ENCODE measurements at regions of chr3 and their contacts with region 1.

Region 1: DNA sequence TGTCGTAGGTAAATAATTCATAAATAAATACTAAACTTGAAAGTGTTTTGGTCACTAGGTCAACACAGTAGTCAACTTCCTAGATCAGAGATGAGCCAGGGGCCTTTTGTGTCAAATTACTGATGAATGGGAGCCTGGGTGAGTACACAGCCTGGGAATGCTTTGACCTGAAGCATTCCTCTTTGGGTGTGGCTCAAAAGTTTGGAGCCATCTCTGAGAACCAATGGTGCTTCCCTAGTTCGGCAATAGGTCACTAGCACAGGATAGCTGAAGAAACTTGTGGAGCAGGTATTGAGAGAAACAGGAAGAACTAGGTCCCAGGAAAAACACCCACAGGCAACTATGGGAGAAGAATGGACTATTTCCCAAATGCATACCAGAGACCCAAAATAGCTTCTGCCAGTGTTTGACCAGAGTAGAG is 56.6 kb upstream of the PLXND1 start:
- DNase-seq: peak; percentile 91 to 93
- H3K4me3 ChIP-seq: no peak overlapping the region
- H3K4me3 Mint-ChIP-seq: peak overlapping the region; percentile 70
- H3K27ac Mint-ChIP-seq: peak overlapping the region; percentile 98
- H3K4me1 ChIP-seq: peaks cover 70% of the 10 kb centered on the region
- H3K4me1 Mint-ChIP-seq: peaks cover 32% of the 10 kb centered on the region
- H3K27me3 ChIP-seq: no peaks in the 10 kb centered on the region
- H3K27me3 Mint-ChIP-seq: no peaks in the 10 kb centered on the region
- CTCF ChIP-seq: no peak

Region 2: GRCh38 chr3:129560901-129561594 is 102.0 kb before region 1 on chr3:
- CTCF ChIA-PET with region 1: no interaction called
- POLR2A ChIA-PET with region 1: no interaction called
- intact Hi-C with region 1: no loop called
- DNase-seq: no peak
- H3K4me3 ChIP-seq: no peak overlapping the region
- H3K4me3 Mint-ChIP-seq: no peak overlapping the region
- H3K27ac Mint-ChIP-seq: no peak overlapping the region
- H3K4me1 ChIP-seq: no peaks in the 10 kb centered on the region; the same call in 1 of the 2 replicates
- H3K4me1 Mint-ChIP-seq: peaks cover 8% of the 10 kb centered on the region
- H3K27me3 ChIP-seq: no peaks in the 10 kb centered on the region
- H3K27me3 Mint-ChIP-seq: no peaks in the 10 kb centered on the region
- CTCF ChIP-seq: no peak

Region 3: DNA sequence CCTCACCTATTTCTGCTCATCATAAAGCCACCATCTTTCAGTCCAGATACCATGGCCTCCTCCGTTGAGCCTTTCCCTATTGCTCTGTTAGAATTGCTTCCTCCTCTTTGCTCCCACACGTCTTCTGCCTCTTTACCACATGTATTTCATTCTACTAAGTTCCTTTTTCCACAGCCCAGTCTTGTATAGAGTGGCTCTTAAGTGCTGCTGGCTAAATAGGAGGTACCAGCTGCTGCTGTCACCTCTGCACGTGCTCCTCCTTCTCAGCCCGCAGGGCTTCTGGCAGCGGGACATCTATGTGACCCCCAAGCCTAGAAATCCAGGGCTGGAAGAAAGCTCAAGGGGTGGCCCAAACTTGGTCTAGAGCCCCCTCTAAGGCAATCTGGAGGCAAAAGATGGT is 17.7 kb before region 1 on chr3:
- CTCF ChIA-PET with region 1: no interaction called
- POLR2A ChIA-PET with region 1: no interaction called
- intact Hi-C with region 1: loop called (anchors 2 kb)
- DNase-seq: no peak
- H3K4me3 ChIP-seq: no peak overlapping the region
- H3K4me3 Mint-ChIP-seq: peak overlapping the region; percentile 16
- H3K27ac Mint-ChIP-seq: peak overlapping the region; percentile 61
- H3K4me1 ChIP-seq: peaks cover 52% of the 10 kb centered on the region
- H3K4me1 Mint-ChIP-seq: peaks cover 30% of the 10 kb centered on the region
- H3K27me3 ChIP-seq: no peaks in the 10 kb centered on the region
- H3K27me3 Mint-ChIP-seq: no peaks in the 10 kb centered on the region
- CTCF ChIP-seq: no peak

Region 4: GRCh38 chr3:129673882-129674797 is 11.1 kb after region 1 on chr3:
- CTCF ChIA-PET with region 1: interaction called, 5 read pairs
- POLR2A ChIA-PET with region 1: interaction called, 4 read pairs
- intact Hi-C with region 1: loop called (anchors 1 kb)
- DNase-seq: peak in 1 of 2 experiments; percentile 32
- H3K4me3 ChIP-seq: no peak overlapping the region
- H3K4me3 Mint-ChIP-seq: peak overlapping the region; percentile 29
- H3K27ac Mint-ChIP-seq: peak overlapping the region; percentile 53
- H3K4me1 ChIP-seq: peaks cover 28% of the 10 kb centered on the region
- H3K4me1 Mint-ChIP-seq: peaks cover 21% of the 10 kb centered on the region
- H3K27me3 ChIP-seq: no peaks in the 10 kb centered on the region
- H3K27me3 Mint-ChIP-seq: no peaks in the 10 kb centered on the region
- CTCF ChIP-seq: no peak

Region 5: GRCh38 chr3:129694256-129694655 is 31.2 kb after region 1 on chr3:
- CTCF ChIA-PET with region 1: no interaction called
- POLR2A ChIA-PET with region 1: no interaction called
- intact Hi-C with region 1: loop called (anchors 1 kb)
- DNase-seq: peak; percentile 79 to 86
- H3K4me3 ChIP-seq: no peak overlapping the region
- H3K4me3 Mint-ChIP-seq: peak overlapping the region; percentile 48
- H3K27ac Mint-ChIP-seq: peak overlapping the region; percentile 94
- H3K4me1 ChIP-seq: peaks cover 36% of the 10 kb centered on the region
- H3K4me1 Mint-ChIP-seq: peaks cover 45% of the 10 kb centered on the region
- H3K27me3 ChIP-seq: no peaks in the 10 kb centered on the region
- H3K27me3 Mint-ChIP-seq: no peaks in the 10 kb centered on the region
- CTCF ChIP-seq: no peak

Region 6: DNA sequence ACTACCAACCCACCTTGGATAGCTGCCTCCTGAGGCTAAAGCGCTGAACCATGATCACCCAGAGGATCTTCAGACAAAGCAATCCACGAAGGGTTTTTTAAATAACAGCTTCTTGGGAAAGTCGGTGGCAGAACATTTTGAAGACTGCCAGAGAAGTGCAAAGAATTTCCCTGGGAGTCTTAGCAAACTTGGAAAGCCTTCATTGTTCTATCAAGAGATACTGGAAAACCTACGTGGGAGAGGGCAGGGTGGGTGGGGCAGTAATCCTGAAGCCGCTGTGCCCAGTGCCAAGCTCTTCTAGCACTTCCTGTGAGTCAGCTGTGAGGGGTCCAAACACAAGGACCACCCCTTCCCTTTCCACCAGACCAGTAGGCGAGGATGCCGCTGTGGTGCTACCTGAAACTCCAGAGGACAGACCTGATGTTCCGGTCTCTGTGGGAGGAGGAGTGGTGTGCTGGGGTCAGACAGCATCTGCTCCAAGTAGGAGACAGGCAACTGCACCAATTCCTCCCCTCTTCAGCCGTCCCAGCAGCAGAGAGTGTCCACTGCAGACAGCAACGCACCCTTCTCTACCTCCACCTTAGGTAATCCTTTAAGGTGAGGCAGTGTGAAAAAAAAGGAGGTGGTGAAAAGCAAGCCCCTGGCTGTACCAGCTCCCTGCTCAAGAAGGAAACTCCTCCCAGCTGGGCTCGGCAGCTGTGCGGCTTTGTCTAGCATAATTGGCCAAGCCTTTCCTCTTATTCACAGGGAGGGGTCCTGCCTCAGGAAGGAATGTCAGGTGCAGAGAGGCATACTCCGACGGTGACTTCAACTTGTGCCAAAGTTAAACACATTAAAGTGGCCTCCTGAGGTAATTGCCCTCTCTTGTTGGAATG is 131.5 kb after region 1 on chr3:
- CTCF ChIA-PET with region 1: no interaction called
- POLR2A ChIA-PET with region 1: interaction called, 5 read pairs
- intact Hi-C with region 1: loop called (anchors 1 kb)
- DNase-seq: peak; percentile 85
- H3K4me3 ChIP-seq: peak overlapping the region; percentile 16
- H3K4me3 Mint-ChIP-seq: peak overlapping the region; percentile 74
- H3K27ac Mint-ChIP-seq: peak overlapping the region; percentile 75
- H3K4me1 ChIP-seq: peaks cover 20% of the 10 kb centered on the region
- H3K4me1 Mint-ChIP-seq: no peaks in the 10 kb centered on the region
- H3K27me3 ChIP-seq: no peaks in the 10 kb centered on the region
- H3K27me3 Mint-ChIP-seq: no peaks in the 10 kb centered on the region
- CTCF ChIP-seq: no peak

Region 7: GRCh38 chr3:129934234-129935123 is 271.4 kb after region 1 on chr3:
- CTCF ChIA-PET with region 1: no interaction called
- POLR2A ChIA-PET with region 1: no interaction called
- intact Hi-C with region 1: no loop called
- DNase-seq: peak in 1 of 2 experiments; percentile 42
- H3K4me3 ChIP-seq: no peak overlapping the region
- H3K4me3 Mint-ChIP-seq: no peak overlapping the region
- H3K27ac Mint-ChIP-seq: no peak overlapping the region
- H3K4me1 ChIP-seq: no peaks in the 10 kb centered on the region
- H3K4me1 Mint-ChIP-seq: no peaks in the 10 kb centered on the region
- H3K27me3 ChIP-seq: no peaks in the 10 kb centered on the region
- H3K27me3 Mint-ChIP-seq: no peaks in the 10 kb centered on the region
- CTCF ChIP-seq: peak; percentile 78 to 91

Measured in Caco-2 (cell line).